Activated CD8-positive, alpha-beta T cell treated with anti-CD3 and anti-CD28 coated beads for 36 hours (primary cell): ENCODE measurements at regions of chr18 and their contacts with region 1.

Region 1: GRCh38 chr18:3129053-3129864 is 90.5 kb downstream of the MYOM1 start:
- DNase-seq: peak; percentile 92
- ATAC-seq: peak; percentile 99
- H3K4me3 Mint-ChIP-seq: no peak overlapping the region
- H3K27ac Mint-ChIP-seq: peak overlapping the region; percentile 14
- H3K4me1 Mint-ChIP-seq: peaks cover 9% of the 10 kb centered on the region
- H3K27me3 Mint-ChIP-seq: no peaks in the 10 kb centered on the region
- CTCF ChIP-seq: peak; percentile 76

Region 2: DNA sequence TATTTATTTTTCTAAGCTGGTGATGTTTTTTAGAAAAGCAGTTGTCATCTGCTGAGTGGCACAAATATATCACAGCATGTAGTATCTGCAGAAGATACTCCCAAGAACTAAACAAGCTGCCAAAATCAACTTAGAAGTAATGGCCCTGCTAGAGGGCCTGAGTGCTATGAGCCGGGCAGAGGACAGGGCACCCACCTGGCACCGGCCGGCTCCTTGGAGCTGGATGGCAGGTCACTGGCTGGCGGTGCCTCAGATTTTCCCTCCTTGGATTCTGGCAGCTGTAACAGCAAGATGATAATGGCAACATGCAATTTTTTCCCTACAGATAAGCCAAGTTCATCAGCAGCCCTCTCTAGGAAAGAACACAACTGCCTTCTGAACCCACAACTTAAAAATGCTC is 202.7 kb before region 1 on chr18:
- CTCF ChIA-PET with region 1: interaction called, 17 read pairs
- POLR2A ChIA-PET with region 1: no interaction called
- intact Hi-C with region 1: no loop called
- DNase-seq: no peak
- ATAC-seq: no peak
- H3K4me3 Mint-ChIP-seq: no peak overlapping the region
- H3K27ac Mint-ChIP-seq: no peak overlapping the region
- H3K4me1 Mint-ChIP-seq: no peaks in the 10 kb centered on the region
- H3K27me3 Mint-ChIP-seq: no peaks in the 10 kb centered on the region
- CTCF ChIP-seq: no peak

Region 3: DNA sequence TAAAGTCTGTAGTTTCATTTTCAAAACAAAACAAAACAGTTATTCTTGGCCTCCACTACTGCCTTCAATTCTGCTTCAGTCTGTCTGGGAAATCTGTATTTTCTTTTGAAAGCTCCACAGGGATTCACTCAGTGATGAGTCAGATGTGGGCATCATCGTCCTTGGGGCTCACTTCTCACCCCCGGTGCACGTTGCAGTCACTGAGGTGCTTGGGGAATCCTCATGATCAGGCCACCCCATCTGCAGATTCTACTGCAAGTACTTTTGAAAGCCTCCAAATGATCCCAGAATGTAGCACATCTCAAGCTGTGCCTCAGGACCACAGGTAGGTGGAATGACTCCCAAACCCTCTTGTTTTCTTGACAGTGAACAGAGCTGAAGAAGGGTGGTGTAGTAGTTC is 150.6 kb before region 1 on chr18:
- CTCF ChIA-PET with region 1: interaction called, 10 read pairs
- POLR2A ChIA-PET with region 1: no interaction called
- intact Hi-C with region 1: no loop called
- DNase-seq: peak; percentile 54
- ATAC-seq: peak; percentile 9
- H3K4me3 Mint-ChIP-seq: peak overlapping the region; percentile 74
- H3K27ac Mint-ChIP-seq: peak overlapping the region; percentile 89
- H3K4me1 Mint-ChIP-seq: peaks cover 73% of the 10 kb centered on the region
- H3K27me3 Mint-ChIP-seq: no peaks in the 10 kb centered on the region
- CTCF ChIP-seq: no peak

Region 4: DNA sequence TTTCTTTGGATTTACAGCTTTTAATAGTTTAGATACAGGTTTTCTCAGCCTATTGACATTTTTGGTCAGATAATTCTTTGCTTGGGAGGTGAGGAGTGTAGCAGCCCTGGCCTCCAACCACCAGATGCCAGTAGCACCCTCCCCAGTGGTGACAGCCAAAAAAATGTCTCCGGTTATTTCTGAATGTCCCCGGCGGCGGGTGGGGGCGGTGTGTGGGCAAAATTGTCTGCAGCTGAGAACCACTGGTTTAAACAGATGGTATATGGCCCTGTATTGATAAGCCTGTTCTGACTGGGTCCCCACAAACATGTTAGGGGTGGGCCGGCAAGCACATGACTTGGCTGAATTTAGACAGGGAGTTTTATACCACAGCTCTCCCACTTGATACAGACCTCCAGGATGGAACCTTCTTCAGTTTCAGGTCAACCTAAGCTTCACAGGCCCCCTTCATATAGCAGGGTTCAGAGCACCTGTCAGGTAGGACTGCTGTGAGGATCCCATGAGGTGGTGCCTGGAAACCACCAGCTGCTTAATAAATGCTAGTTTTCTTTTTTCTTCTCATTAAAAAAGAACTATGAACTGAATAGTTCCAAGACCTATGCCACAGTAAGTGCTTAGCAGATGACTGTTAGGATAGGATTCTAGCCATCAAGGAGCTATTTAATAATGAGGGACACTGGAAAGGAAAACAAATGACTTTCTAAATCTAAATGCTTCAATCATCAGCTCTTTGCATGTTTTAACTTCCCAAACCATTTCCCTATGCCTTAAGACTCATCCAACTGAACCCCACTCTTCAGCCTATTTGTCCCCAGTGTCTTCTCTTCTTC is 134.4 kb before region 1 on chr18:
- CTCF ChIA-PET with region 1: interaction called, 79 read pairs
- POLR2A ChIA-PET with region 1: interaction called, 5 read pairs
- intact Hi-C with region 1: loop called (anchors 5 kb)
- DNase-seq: peak; percentile 93
- ATAC-seq: peak; percentile 73
- H3K4me3 Mint-ChIP-seq: peak overlapping the region; percentile 36
- H3K27ac Mint-ChIP-seq: peak overlapping the region; percentile 87
- H3K4me1 Mint-ChIP-seq: peaks cover 84% of the 10 kb centered on the region
- H3K27me3 Mint-ChIP-seq: no peaks in the 10 kb centered on the region
- CTCF ChIP-seq: peak; percentile 76

Region 5: GRCh38 chr18:3088449-3088848 is 40.8 kb before region 1 on chr18:
- CTCF ChIA-PET with region 1: interaction called, 16 read pairs
- POLR2A ChIA-PET with region 1: no interaction called
- intact Hi-C with region 1: no loop called
- DNase-seq: no peak
- ATAC-seq: peak; percentile 13
- H3K4me3 Mint-ChIP-seq: no peak overlapping the region
- H3K27ac Mint-ChIP-seq: no peak overlapping the region
- H3K4me1 Mint-ChIP-seq: peaks cover 13% of the 10 kb centered on the region
- H3K27me3 Mint-ChIP-seq: no peaks in the 10 kb centered on the region
- CTCF ChIP-seq: no peak

Region 6: GRCh38 chr18:3104190-3105054 is 24.8 kb before region 1 on chr18:
- CTCF ChIA-PET with region 1: interaction called, 66 read pairs
- POLR2A ChIA-PET with region 1: no interaction called
- intact Hi-C with region 1: no loop called
- DNase-seq: no peak
- ATAC-seq: no peak
- H3K4me3 Mint-ChIP-seq: no peak overlapping the region
- H3K27ac Mint-ChIP-seq: no peak overlapping the region
- H3K4me1 Mint-ChIP-seq: no peaks in the 10 kb centered on the region
- H3K27me3 Mint-ChIP-seq: no peaks in the 10 kb centered on the region
- CTCF ChIP-seq: no peak

Region 7: DNA sequence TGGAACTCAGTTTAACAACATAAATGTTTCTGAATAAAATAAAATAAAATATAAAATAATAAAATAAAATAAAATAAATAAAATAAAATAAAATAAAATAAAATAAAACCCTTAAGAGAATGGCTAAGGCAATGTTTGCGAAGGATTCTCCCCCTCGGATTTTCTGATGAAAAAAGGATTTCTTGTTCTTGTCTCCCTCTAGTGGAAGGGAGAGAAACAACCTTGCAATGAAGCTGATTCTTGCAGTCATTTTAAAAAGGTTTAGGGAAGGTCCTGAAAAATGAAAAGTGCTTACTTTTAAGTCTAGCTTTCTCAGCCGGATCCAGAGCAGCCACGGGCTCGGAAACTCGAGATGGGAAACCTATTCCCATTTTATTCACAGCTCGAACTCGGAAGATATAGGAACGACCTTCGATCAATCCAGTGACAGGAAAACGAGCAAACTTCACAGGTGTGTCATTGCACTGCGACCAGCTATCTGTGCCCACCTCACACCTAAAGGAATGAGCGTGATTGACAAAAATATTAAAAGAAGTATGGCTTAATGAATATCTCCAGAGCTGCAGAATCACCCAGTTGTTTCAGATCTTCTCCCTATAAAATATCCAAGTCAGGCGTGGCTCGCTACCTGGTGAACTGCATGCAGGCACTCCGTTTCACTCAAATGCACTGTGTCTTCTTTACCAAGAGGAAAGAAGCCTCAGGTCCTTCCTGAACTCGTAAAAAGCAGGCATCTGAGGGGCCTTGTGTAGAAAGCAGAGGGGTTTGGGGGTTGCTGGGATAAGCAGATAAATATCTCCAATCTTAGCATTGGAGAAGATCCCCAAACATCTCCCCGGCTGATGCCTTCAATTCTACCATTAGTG is 22.4 kb after region 1 on chr18:
- CTCF ChIA-PET with region 1: interaction called, 47 read pairs
- POLR2A ChIA-PET with region 1: no interaction called
- intact Hi-C with region 1: no loop called
- DNase-seq: no peak
- ATAC-seq: no peak
- H3K4me3 Mint-ChIP-seq: no peak overlapping the region
- H3K27ac Mint-ChIP-seq: no peak overlapping the region
- H3K4me1 Mint-ChIP-seq: peaks cover 2% of the 10 kb centered on the region
- H3K27me3 Mint-ChIP-seq: no peaks in the 10 kb centered on the region
- CTCF ChIP-seq: peak; percentile 82

Region 8: DNA sequence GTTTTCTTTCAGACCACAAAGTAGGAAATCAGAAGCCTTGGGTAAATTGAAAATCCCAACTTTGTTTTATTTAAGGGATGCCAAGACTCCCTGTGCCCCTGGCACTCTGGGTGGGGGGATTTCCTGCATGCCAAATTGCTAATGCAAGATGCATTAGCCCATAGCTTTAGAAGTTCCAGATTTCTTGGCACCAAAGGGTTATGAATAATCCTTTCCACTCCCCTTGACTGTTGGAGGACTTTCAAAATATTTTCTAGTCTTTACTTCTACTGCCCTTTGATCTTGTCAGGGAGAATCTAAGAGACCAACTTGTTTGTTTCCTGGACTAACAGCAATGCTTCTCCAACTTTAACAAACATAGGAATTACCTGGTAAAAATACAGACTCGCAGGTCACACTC is 238.9 kb after region 1 on chr18:
- CTCF ChIA-PET with region 1: no interaction called
- POLR2A ChIA-PET with region 1: no interaction called
- intact Hi-C with region 1: no loop called
- DNase-seq: no peak
- ATAC-seq: no peak
- H3K4me3 Mint-ChIP-seq: no peak overlapping the region
- H3K27ac Mint-ChIP-seq: no peak overlapping the region
- H3K4me1 Mint-ChIP-seq: no peaks in the 10 kb centered on the region
- H3K27me3 Mint-ChIP-seq: peaks cover 4% of the 10 kb centered on the region
- CTCF ChIP-seq: no peak